Transverse colon (tissue), 4 donors: ENCODE measurements at regions of chr17 and their contacts with region 1.

Region 1: DNA sequence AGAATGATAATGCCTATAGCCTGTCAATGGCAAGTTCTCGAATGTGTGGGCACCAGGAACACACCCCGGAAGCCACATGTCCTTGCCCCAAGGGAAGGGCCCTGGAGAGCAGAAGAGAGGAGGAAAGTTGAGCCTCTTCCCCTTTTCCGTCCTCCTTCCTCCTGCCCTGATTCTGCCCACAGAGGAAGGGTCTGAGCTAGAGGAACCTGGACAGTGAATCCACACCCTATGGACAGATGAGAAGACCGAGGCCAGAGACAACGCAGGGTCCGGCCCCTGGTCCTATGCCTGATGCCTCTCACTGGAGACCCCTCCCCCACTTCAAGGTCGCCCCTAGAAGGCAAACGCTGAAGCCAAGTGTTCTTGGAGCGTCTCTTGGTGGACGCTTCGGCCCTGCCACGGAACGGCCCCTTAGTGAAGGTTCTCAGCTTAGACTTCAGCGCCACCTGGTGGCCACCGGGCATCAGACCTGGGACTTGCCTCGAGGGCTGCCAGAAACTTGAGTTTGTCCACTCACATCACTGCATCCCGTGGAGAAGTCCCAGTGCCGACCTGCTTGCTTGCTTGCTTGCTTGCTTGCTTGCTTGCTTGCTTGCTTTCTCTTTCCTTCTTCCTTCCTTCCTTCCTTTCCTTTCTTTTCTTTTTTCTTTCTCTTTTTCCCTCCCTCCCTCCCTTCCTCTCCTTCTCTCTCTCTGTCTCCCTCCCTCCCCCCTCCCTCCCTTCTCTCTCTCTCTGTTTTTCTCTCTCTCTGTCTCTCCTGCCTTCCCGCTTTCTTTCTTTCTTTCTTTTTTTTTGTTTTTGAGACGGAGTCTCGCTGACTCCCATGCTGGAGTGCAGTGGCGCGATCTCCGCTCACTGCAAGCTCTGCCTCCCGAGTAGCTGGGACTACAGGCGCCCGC is 20.6 kb upstream of the SPNS3 start:
- DNase-seq: peak; percentile 94
- H3K4me3 ChIP-seq: no peak overlapping the region
- H3K27ac ChIP-seq: no peak overlapping the region
- H3K4me1 ChIP-seq: peaks cover 0 to 5% (median 0%) of the 10 kb centered on the region in 4 donors
- H3K27me3 ChIP-seq: no peaks in the 10 kb centered on the region
- CTCF ChIP-seq: peak; percentile 82 to 94 (median 88)
- EP300 ChIP-seq: no peak
- POLR2A ChIP-seq: no peak

Region 2: GRCh38 chr17:3913531-3914311 is 499.5 kb before region 1 on chr17:
- in situ Hi-C with region 1: no loop called
- intact Hi-C with region 1: no loop called
- DNase-seq: peak; percentile 88
- H3K4me3 ChIP-seq: no peak overlapping the region
- H3K27ac ChIP-seq: peak overlapping the region; percentile 53 to 82 (median 80)
- H3K4me1 ChIP-seq: peaks cover 29 to 45% (median 35%) of the 10 kb centered on the region in 4 donors
- H3K27me3 ChIP-seq: no peaks in the 10 kb centered on the region
- CTCF ChIP-seq: peak; percentile 96 to 98 (median 98)
- EP300 ChIP-seq: no peak
- POLR2A ChIP-seq: no peak

Region 3: DNA sequence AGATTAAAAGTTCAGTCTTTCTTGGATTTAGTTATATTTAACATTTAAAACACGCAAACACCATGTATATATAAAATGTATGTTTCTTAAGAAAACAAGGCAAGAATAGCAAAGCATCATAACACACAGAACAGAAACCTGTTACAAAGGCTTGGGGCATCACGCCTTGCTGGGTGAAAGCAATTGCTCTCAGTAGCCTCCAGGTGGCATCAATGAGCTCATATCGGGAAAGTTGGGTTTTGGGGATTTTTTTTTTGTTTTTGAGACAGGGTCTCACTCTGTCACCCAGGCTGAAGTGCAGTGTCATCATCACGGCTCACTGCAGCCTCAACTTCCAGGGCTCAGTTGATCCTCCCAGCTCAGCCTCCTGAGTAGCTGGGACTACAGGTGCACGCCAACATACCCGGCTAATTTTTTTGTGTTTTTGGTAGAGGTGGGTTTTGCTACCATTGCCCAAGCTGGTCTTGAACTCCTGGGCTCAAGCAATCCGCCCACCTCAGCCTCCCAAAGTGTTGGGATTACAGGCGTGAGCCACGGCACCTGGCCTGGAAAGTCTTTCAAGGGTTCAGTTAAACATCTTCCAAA is 213.3 kb before region 1 on chr17:
- in situ Hi-C with region 1: loop called in 2 of 4 experiments (anchors 5 to 10 kb)
- intact Hi-C with region 1: loop called (anchors 5 kb)
- DNase-seq: no peak
- H3K4me3 ChIP-seq: no peak overlapping the region
- H3K27ac ChIP-seq: no peak overlapping the region
- H3K4me1 ChIP-seq: peaks cover 0 to 11% (median 6%) of the 10 kb centered on the region in 4 donors
- H3K27me3 ChIP-seq: no peaks in the 10 kb centered on the region
- CTCF ChIP-seq: peak; percentile 67 to 78 (median 75)
- EP300 ChIP-seq: no peak
- POLR2A ChIP-seq: no peak

Region 4: GRCh38 chr17:4229627-4230541 is 183.3 kb before region 1 on chr17:
- in situ Hi-C with region 1: loop called in 1 of 4 experiments (anchors 10 kb)
- intact Hi-C with region 1: no loop called
- DNase-seq: peak; percentile 34
- H3K4me3 ChIP-seq: no peak overlapping the region
- H3K27ac ChIP-seq: peak overlapping the region; percentile 75 to 86 (median 83)
- H3K4me1 ChIP-seq: peaks cover 28 to 69% (median 43%) of the 10 kb centered on the region in 4 donors
- H3K27me3 ChIP-seq: no peaks in the 10 kb centered on the region
- CTCF ChIP-seq: no peak
- EP300 ChIP-seq: peak; percentile 92
- POLR2A ChIP-seq: no peak